ENCODE measurements at regions of chr18 and their contacts with region 1.

Region 1: DNA sequence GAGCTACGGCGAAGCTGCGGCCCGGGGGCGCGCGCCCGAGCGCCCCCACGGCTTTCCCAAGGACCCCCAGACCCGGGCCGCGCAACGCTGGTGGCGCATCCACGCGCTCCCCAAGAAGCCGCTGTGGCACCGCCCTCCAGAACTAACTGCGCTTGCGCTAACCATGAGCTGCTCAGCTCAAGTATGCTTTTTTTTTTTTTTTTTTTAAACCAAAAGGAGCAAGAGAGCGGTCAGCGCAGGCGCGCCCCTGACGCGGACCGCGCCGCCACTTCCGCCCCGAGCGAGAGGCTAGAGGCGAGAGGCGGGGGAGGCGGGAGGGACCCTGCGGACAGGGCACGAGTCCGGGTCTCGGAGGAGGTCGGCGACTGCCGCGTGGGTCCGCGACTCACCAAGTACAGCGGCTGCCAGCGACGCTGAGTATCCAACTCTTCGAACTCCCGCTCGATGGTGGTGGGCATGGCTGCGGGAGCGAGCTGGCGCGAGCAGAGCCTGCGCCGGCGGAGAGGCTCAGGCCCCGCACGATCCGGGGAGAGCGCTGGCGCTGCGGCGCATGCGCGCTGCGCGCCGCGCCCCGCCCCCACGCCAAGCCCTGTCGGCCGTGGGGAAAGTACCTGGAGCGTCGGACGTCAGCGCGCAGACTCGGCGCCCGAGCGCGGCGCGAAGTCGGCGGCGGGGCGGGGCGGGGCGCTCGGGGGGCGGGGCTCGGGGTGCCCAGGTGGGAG is at the start of gene PTPN2:
- DNase-seq: peak; percentile 92 to 95 (median 94)
- ATAC-seq: peak; percentile 91
- H3K4me3 ChIP-seq: peak within 1 kb of the TSS; percentile 89
- H3K4me3 Mint-ChIP-seq: peak within 1 kb of the TSS; percentile 91 to 98 (median 96)
- H3K27ac ChIP-seq: peak within 1 kb of the TSS; percentile 99
- H3K27ac Mint-ChIP-seq: peak within 1 kb of the TSS; percentile 93 to 99 (median 96)
- H3K4me1 ChIP-seq: peaks cover 31 to 33% of the 10 kb centered on the region in 2 donors
- H3K4me1 Mint-ChIP-seq: peaks cover 43 to 69% (median 60%) of the 10 kb centered on the region in 7 donors
- H3K27me3 ChIP-seq: no peaks in the 10 kb centered on the region
- H3K27me3 Mint-ChIP-seq: no peaks in the 10 kb centered on the region
- total RNA-seq, gene PTPN2: 55.8 to 82.2 (median 76.2) TPM

Region 2: DNA sequence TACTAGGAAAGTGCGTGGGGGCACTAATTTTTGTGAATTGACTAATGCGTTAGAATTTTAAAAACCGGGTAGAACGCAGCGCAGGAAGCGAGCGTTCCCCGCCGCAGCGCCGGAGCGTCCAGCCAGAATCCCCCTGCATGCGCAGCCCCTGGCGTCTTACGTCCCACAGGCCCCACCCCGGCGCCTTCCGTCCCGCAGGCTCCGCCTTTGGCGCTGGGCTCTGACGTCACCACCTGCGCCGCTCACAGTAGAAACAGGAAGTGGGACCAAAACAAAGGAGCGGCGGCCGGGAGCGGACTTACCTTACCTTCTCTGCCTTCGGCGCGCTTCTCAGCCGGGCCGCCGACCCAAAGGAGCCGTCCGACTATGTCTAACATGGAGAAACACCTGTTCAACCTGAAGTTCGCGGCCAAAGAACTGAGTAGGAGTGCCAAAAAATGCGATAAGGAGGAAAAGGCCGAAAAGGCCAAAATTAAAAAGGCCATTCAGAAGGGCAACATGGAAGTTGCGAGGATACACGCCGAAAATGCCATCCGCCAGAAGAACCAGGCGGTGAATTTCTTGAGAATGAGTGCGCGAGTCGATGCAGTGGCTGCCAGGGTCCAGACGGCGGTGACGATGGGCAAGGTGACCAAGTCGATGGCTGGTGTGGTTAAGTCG is 1032.6 kb before region 1 on chr18 and contains the start of gene CHMP1B:
- CTCF ChIA-PET with region 1: no interaction called
- POLR2A ChIA-PET with region 1: interaction called, 3 read pairs
- intact Hi-C with region 1: loop called in 1 of 2 experiments (anchors 1 kb)
- DNase-seq: peak; percentile 95 to 97 (median 97)
- ATAC-seq: peak; percentile 91
- H3K4me3 ChIP-seq: peak within 1 kb of the TSS; percentile 88
- H3K4me3 Mint-ChIP-seq: peak within 1 kb of the TSS; percentile 89 to 100 (median 100)
- H3K27ac ChIP-seq: peak within 1 kb of the TSS; percentile 96
- H3K27ac Mint-ChIP-seq: peak within 1 kb of the TSS; percentile 97 to 100 (median 100)
- H3K4me1 ChIP-seq: peaks cover 19 to 21% of the 10 kb centered on the region in 2 donors
- H3K4me1 Mint-ChIP-seq: peaks cover 16 to 62% (median 50%) of the 10 kb centered on the region in 7 donors
- H3K27me3 ChIP-seq: no peaks in the 10 kb centered on the region
- H3K27me3 Mint-ChIP-seq: peaks cover 0 to 13% (median 0%) of the 10 kb centered on the region in 5 donors
- total RNA-seq, gene CHMP1B: 27.2 to 115 (median 56.1) TPM

Region 3: GRCh38 chr18:12376718-12377555 is 506.9 kb before region 1 on chr18 and contains the start of gene AFG3L2:
- CTCF ChIA-PET with region 1: no interaction called
- POLR2A ChIA-PET with region 1: interaction called, 10 read pairs
- intact Hi-C with region 1: loop called (anchors 1 kb)
- DNase-seq: peak; percentile 99 to 100 (median 100)
- ATAC-seq: peak; percentile 93
- H3K4me3 ChIP-seq: peak within 1 kb of the TSS; percentile 93
- H3K4me3 Mint-ChIP-seq: peak within 1 kb of the TSS; percentile 85 to 93 (median 92)
- H3K27ac ChIP-seq: peak within 1 kb of the TSS; percentile 97
- H3K27ac Mint-ChIP-seq: peak within 1 kb of the TSS; percentile 77 to 95 (median 90)
- H3K4me1 ChIP-seq: peaks cover 13 to 28% of the 10 kb centered on the region in 2 donors
- H3K4me1 Mint-ChIP-seq: peaks cover 32 to 52% (median 46%) of the 10 kb centered on the region in 7 donors
- H3K27me3 ChIP-seq: no peaks in the 10 kb centered on the region
- H3K27me3 Mint-ChIP-seq: peaks cover 0 to 22% (median 0%) of the 10 kb centered on the region in 5 donors
- total RNA-seq, gene AFG3L2: 26.3 to 42.3 (median 32.0) TPM

Region 4: GRCh38 chr18:12686100-12686499 is 197.7 kb before region 1 on chr18:
- CTCF ChIA-PET with region 1: no interaction called
- POLR2A ChIA-PET with region 1: no interaction called
- intact Hi-C with region 1: no loop called
- DNase-seq: no peak
- ATAC-seq: no peak
- H3K4me3 ChIP-seq: no peak overlapping the region
- H3K4me3 Mint-ChIP-seq: no peak overlapping the region
- H3K27ac ChIP-seq: no peak overlapping the region
- H3K27ac Mint-ChIP-seq: no peak overlapping the region
- H3K4me1 ChIP-seq: no peaks in the 10 kb centered on the region
- H3K4me1 Mint-ChIP-seq: peaks cover 0 to 6% (median 0%) of the 10 kb centered on the region in 7 donors
- H3K27me3 ChIP-seq: no peaks in the 10 kb centered on the region
- H3K27me3 Mint-ChIP-seq: no peaks in the 10 kb centered on the region

Region 5: DNA sequence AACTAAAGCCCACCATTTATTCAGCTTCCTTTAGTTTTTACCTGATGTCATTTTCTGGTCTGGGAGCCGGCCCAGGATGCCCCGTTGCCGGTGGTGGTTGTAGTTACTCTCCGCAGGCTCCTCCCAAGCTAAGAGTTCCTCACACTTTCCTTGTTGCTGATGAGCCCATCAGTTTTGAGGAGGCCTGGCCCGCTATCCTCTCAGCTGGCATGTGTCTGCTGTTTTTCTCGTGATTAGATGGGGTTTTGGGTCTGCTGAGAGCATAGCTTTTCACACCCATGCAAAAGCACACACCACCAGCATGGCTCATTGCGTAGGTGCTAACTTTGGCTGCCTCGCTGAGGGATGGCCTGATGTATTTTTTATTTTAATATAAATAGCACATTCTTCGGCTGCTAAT is 108.9 kb before region 1 on chr18:
- CTCF ChIA-PET with region 1: no interaction called
- POLR2A ChIA-PET with region 1: interaction called, 8 read pairs
- intact Hi-C with region 1: loop called in 1 of 2 experiments (anchors 2 kb)
- DNase-seq: no peak
- ATAC-seq: peak; percentile 52
- H3K4me3 ChIP-seq: peak overlapping the region; percentile 74
- H3K4me3 Mint-ChIP-seq: peak overlapping the region; percentile 81 to 90 (median 87)
- H3K27ac ChIP-seq: peak overlapping the region; percentile 64
- H3K27ac Mint-ChIP-seq: peak overlapping the region; percentile 16 to 95 (median 87)
- H3K4me1 ChIP-seq: peaks cover 0 to 6% of the 10 kb centered on the region in 2 donors
- H3K4me1 Mint-ChIP-seq: peaks cover 0 to 18% (median 16%) of the 10 kb centered on the region in 7 donors
- H3K27me3 ChIP-seq: no peaks in the 10 kb centered on the region
- H3K27me3 Mint-ChIP-seq: no peaks in the 10 kb centered on the region

Region 6: DNA sequence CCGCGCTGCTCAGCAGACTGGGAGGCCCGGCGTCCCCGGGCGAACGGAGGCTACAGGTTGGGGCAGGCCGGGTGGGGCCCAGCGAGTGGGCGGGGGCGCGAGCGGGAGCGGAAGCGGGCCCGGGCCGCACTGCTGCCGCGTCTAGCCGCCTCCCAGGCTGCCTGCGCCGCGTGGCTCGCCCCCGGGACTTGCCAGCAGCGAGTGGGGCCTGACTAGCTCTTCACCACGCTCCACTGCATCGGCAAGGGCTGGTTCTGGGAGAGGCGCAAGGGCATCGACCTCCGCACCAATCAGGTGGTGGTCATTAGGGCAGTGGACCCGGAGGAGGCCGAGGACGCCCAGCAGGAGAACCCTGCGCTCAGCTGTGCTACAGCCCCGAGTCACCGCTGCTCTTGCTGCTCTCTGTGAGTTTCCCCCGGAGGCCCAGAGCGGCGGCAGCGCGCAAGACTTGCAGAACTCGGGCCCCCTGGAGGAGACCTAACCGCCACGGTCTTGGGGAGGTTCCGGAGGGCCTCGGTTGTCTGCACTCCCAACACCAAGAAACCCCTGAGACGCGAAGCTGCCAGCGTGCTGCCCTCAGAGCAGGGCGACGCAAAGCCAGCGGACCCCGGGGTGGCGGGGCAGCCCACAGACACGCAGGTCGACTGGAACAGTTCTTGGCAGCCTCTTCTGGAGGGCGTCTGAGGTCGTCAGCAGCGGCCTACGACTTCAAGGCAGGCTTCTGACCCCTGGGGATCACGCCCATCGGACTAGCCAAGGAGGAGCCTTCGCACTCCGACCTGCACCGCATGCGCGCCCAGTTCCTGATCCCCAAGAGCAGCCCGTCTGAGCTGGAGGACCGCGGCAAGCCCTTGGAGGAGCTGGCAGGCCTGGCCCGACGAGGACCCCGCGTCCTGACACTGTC is 27.4 kb after region 1 on chr18:
- CTCF ChIA-PET with region 1: no interaction called
- POLR2A ChIA-PET with region 1: interaction called, 5 read pairs
- intact Hi-C with region 1: loop called in 1 of 2 experiments (anchors 2 kb)
- DNase-seq: peak; percentile 34 to 65 (median 50)
- ATAC-seq: peak; percentile 89
- H3K4me3 ChIP-seq: peak overlapping the region; percentile 62
- H3K4me3 Mint-ChIP-seq: peak overlapping the region; percentile 25 to 81 (median 74)
- H3K27ac ChIP-seq: no peak overlapping the region
- H3K27ac Mint-ChIP-seq: peak overlapping the region in 5 of 9 donors; percentile 12 to 68 (median 62)
- H3K4me1 ChIP-seq: peaks cover 0 to 10% of the 10 kb centered on the region in 2 donors
- H3K4me1 Mint-ChIP-seq: peaks cover 3 to 14% (median 6%) of the 10 kb centered on the region in 7 donors
- H3K27me3 ChIP-seq: no peaks in the 10 kb centered on the region
- H3K27me3 Mint-ChIP-seq: peaks cover 0 to 30% (median 0%) of the 10 kb centered on the region in 5 donors

Region 7: GRCh38 chr18:13726232-13726971 is 842.6 kb after region 1 on chr18 and contains the starts of genes FAM210A and RNMT:
- CTCF ChIA-PET with region 1: no interaction called
- POLR2A ChIA-PET with region 1: no interaction called
- intact Hi-C with region 1: loop called (anchors 2 to 10 kb)
- DNase-seq: peak; percentile 82 to 95 (median 93)
- ATAC-seq: peak; percentile 96
- H3K4me3 ChIP-seq: peak within 1 kb of the TSS; percentile 95
- H3K4me3 Mint-ChIP-seq: peak within 1 kb of the TSS; percentile 85 to 97 (median 90)
- H3K27ac ChIP-seq: peak within 1 kb of the TSS; percentile 98
- H3K27ac Mint-ChIP-seq: peak within 1 kb of the TSS; percentile 82 to 99 (median 96)
- H3K4me1 ChIP-seq: peaks cover 17 to 38% of the 10 kb centered on the region in 2 donors
- H3K4me1 Mint-ChIP-seq: peaks cover 43 to 69% (median 60%) of the 10 kb centered on the region in 7 donors
- H3K27me3 ChIP-seq: no peaks in the 10 kb centered on the region
- H3K27me3 Mint-ChIP-seq: no peaks in the 10 kb centered on the region
- total RNA-seq, gene FAM210A: 5.9 to 31.5 (median 8.1) TPM
- total RNA-seq, gene RNMT: 47.0 to 101 (median 53.7) TPM